CD4-positive, alpha-beta T cell (primary cell): ENCODE measurements at regions of chr6 and their contacts with region 1.

Region 1: DNA sequence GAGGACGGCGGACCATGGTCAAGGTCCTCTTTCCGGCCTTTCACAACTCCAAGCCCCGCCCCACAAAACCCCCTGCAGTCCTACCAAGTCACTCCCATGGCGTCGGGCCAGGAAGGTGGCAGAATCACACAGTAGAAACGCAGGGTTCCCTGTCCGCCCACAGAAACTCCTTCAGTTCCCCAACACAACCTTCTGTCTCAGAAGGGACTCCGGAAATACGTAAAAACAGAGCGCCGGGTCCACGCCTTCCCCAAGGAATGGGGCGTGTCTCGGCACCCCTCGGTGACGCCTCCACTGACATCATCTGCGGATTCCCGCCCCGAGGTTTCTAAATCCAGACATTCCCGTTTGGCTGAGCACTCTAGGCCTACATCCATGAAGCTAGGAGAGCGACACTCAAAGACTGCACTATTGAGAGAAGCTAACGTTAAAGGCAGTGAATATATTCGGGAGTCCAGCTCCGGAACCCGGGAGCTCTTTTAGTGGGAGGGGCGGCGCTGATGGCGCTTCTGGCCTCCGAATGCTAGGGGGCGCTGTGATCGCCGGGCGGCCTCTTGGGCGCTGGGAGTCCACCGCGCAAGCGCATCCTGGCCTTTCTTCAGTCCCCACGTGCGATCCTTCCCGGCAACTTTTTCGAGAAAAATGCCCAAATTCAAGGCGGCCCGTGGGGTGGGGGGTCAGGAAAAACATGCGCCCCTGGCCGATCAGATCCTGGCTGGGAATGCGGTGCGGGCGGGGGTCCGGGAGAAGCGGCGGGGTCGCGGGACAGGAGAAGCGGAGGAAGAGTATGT is at the starts of genes BYSL and MED20:
- DNase-seq: peak; percentile 89 to 97 (median 93)
- ATAC-seq: peak; percentile 90
- H3K4me3 ChIP-seq: peak within 1 kb of the TSS; percentile 78
- H3K4me3 Mint-ChIP-seq: peak within 1 kb of the TSS; percentile 99
- H3K27ac ChIP-seq: peak within 1 kb of the TSS; percentile 97 to 98
- H3K27ac Mint-ChIP-seq: peak within 1 kb of the TSS; percentile 94
- H3K4me1 ChIP-seq: peaks cover 31% of the 10 kb centered on the region
- H3K4me1 Mint-ChIP-seq: peaks cover 55% of the 10 kb centered on the region
- H3K27me3 ChIP-seq: no peaks in the 10 kb centered on the region
- H3K27me3 Mint-ChIP-seq: no peaks in the 10 kb centered on the region
- CTCF ChIP-seq: peak; percentile 97
- total RNA-seq, gene BYSL: 1.2 to 1.6 TPM
- total RNA-seq, gene MED20: 1.3 to 1.6 TPM

Region 2: DNA sequence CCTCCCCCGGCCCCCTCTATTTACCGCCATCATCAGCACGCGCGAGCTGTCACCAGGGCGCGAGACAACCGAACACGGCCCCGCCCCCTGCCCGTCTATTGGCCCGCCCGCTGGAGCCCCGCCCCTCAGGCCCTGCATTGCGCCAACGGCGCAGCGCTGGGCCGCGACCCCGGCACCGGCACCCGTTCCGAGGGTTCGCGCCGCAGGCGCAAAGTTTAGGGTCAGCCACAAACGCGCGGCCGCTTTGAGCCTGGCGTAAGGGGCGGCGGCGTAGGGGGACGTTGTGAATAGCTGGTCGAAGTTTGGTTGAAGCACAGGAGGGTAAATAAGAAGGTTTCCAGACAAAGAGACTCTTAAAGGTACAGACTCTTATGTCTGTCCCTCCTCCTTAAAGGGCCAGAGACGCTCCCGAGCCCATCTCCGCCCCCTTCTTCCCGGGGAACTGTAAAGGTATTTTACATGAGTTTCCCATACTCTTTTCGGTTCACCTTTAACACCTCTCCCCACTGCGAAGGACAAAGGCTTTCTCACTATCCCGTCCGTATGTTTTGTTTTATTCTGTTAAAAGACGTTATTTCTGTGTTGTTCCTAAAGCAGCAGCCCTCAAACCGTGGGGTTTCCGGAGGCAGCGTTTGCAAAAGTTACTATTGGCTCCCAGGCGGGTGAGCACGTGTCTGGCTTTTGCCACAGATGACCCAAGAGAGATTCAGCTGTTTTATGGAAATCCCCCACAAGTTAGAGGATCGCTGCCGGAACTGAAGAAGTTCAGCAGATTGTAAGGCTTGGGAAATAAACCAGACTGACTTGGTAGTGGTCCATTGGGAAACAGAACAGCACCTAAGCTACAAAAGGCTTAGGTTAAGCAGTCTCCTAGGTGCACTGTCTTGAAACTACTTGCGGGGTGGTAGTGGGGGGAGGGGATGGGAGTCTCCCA is 25.5 kb before region 1 on chr6 and contains the start of gene USP49:
- CTCF ChIA-PET with region 1: interaction called, 7 read pairs
- POLR2A ChIA-PET with region 1: interaction called, 12 read pairs
- intact Hi-C with region 1: loop called (anchors 1 kb)
- DNase-seq: peak; percentile 79 to 96 (median 88)
- ATAC-seq: peak; percentile 93
- H3K4me3 ChIP-seq: peak within 1 kb of the TSS; percentile 84
- H3K4me3 Mint-ChIP-seq: no peak within 1 kb of the TSS
- H3K27ac ChIP-seq: peak within 1 kb of the TSS; percentile 77 to 80
- H3K27ac Mint-ChIP-seq: no peak within 1 kb of the TSS
- H3K4me1 ChIP-seq: peaks cover 21% of the 10 kb centered on the region
- H3K4me1 Mint-ChIP-seq: peaks cover 12% of the 10 kb centered on the region
- H3K27me3 ChIP-seq: no peaks in the 10 kb centered on the region
- H3K27me3 Mint-ChIP-seq: no peaks in the 10 kb centered on the region
- CTCF ChIP-seq: no peak
- total RNA-seq, gene USP49: 1.3 TPM

Region 3: DNA sequence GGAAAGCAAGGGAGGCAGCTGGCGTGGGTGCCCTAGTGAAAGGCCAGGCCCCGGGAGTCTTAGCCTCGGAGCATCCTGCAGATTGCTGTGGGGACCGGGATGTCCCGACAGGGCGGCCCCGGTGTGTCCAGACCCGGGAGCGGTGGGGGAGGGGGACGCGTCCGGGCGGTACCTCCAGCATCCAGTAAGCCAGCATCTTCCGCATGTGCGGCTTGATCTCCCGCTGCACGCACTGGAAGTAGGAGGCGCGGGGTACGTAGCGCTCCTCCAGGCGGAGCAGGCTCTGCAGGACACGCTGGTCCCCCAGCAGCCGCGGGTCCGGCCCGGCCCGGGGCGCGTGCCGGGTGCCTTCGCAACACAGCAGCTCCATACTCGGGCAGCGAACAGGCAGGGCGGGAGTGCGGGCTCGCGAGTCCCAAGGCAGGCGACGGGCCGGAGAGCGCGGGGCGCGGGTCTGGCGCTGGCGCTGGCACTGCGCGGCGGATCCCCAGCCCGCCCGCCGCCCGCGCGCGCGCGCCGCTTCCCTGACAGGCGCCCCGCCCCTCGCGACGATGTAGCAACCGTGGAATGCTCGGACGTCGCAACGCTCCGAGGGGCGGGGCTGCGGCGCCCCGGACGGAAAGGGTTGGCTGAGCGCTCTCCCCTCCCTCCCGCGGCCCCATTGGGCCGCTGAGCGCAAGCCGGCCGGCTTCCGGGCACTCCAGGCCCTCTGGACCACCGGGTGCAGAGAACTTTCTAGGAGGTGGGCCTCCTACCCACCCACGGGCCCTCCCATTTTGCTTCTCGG is 20.4 kb after region 1 on chr6 and contains the start of gene CCND3:
- CTCF ChIA-PET with region 1: interaction called, 84 read pairs
- POLR2A ChIA-PET with region 1: interaction called, 35 read pairs
- intact Hi-C with region 1: loop called (anchors 1 kb)
- DNase-seq: peak; percentile 63 to 92 (median 81)
- ATAC-seq: peak; percentile 55
- H3K4me3 ChIP-seq: peak within 1 kb of the TSS; percentile 96
- H3K4me3 Mint-ChIP-seq: peak within 1 kb of the TSS; percentile 97
- H3K27ac ChIP-seq: peak within 1 kb of the TSS; percentile 68 to 74
- H3K27ac Mint-ChIP-seq: peak within 1 kb of the TSS; percentile 93
- H3K4me1 ChIP-seq: peaks cover 72% of the 10 kb centered on the region
- H3K4me1 Mint-ChIP-seq: peaks cover 80% of the 10 kb centered on the region
- H3K27me3 ChIP-seq: no peaks in the 10 kb centered on the region
- H3K27me3 Mint-ChIP-seq: no peaks in the 10 kb centered on the region
- CTCF ChIP-seq: no peak
- total RNA-seq, gene CCND3: 247 to 248 TPM

Region 4: GRCh38 chr6:42021847-42022754 is 101.0 kb after region 1 on chr6:
- CTCF ChIA-PET with region 1: interaction called, 5 read pairs
- POLR2A ChIA-PET with region 1: interaction called, 10 read pairs
- intact Hi-C with region 1: no loop called
- DNase-seq: peak; percentile 31 to 87 (median 61)
- ATAC-seq: peak; percentile 85
- H3K4me3 ChIP-seq: peak overlapping the region; percentile 17
- H3K4me3 Mint-ChIP-seq: peak overlapping the region; percentile 78
- H3K27ac ChIP-seq: peak overlapping the region; percentile 48 to 78
- H3K27ac Mint-ChIP-seq: peak overlapping the region; percentile 94
- H3K4me1 ChIP-seq: peaks cover 87% of the 10 kb centered on the region
- H3K4me1 Mint-ChIP-seq: peaks cover 71% of the 10 kb centered on the region
- H3K27me3 ChIP-seq: no peaks in the 10 kb centered on the region
- H3K27me3 Mint-ChIP-seq: no peaks in the 10 kb centered on the region
- CTCF ChIP-seq: no peak

Region 5: GRCh38 chr6:42038811-42039408 is 117.8 kb after region 1 on chr6:
- CTCF ChIA-PET with region 1: interaction called, 70 read pairs
- POLR2A ChIA-PET with region 1: interaction called, 30 read pairs
- intact Hi-C with region 1: loop called (anchors 1 to 2 kb)
- DNase-seq: no peak
- ATAC-seq: no peak
- H3K4me3 ChIP-seq: peak overlapping the region; percentile 49
- H3K4me3 Mint-ChIP-seq: peak overlapping the region; percentile 88
- H3K27ac ChIP-seq: peak overlapping the region; percentile 60 to 61
- H3K27ac Mint-ChIP-seq: peak overlapping the region; percentile 89
- H3K4me1 ChIP-seq: peaks cover 98% of the 10 kb centered on the region
- H3K4me1 Mint-ChIP-seq: peaks cover 75% of the 10 kb centered on the region
- H3K27me3 ChIP-seq: no peaks in the 10 kb centered on the region
- H3K27me3 Mint-ChIP-seq: no peaks in the 10 kb centered on the region
- CTCF ChIP-seq: no peak

Region 6: GRCh38 chr6:42050266-42051032 is 129.3 kb after region 1 on chr6 and contains the start of gene TAF8:
- CTCF ChIA-PET with region 1: interaction called, 70 read pairs
- POLR2A ChIA-PET with region 1: interaction called, 30 read pairs
- intact Hi-C with region 1: loop called in 1 of 2 experiments (anchors 2 kb)
- DNase-seq: peak; percentile 78 to 95 (median 84)
- ATAC-seq: peak; percentile 53
- H3K4me3 ChIP-seq: peak within 1 kb of the TSS; percentile 85
- H3K4me3 Mint-ChIP-seq: peak within 1 kb of the TSS; percentile 96
- H3K27ac ChIP-seq: peak within 1 kb of the TSS; percentile 85 to 89
- H3K27ac Mint-ChIP-seq: peak within 1 kb of the TSS; percentile 89
- H3K4me1 ChIP-seq: peaks cover 61% of the 10 kb centered on the region
- H3K4me1 Mint-ChIP-seq: peaks cover 72% of the 10 kb centered on the region
- H3K27me3 ChIP-seq: no peaks in the 10 kb centered on the region
- H3K27me3 Mint-ChIP-seq: no peaks in the 10 kb centered on the region
- CTCF ChIP-seq: no peak
- total RNA-seq, gene TAF8: 30.1 to 34.7 TPM

Region 7: GRCh38 chr6:42084889-42085288 is 163.8 kb after region 1 on chr6:
- CTCF ChIA-PET with region 1: no interaction called
- POLR2A ChIA-PET with region 1: no interaction called
- intact Hi-C with region 1: no loop called
- DNase-seq: no peak
- ATAC-seq: no peak
- H3K4me3 ChIP-seq: no peak overlapping the region
- H3K4me3 Mint-ChIP-seq: no peak overlapping the region
- H3K27ac ChIP-seq: no peak overlapping the region
- H3K27ac Mint-ChIP-seq: no peak overlapping the region
- H3K4me1 ChIP-seq: no peaks in the 10 kb centered on the region
- H3K4me1 Mint-ChIP-seq: no peaks in the 10 kb centered on the region
- H3K27me3 ChIP-seq: no peaks in the 10 kb centered on the region
- H3K27me3 Mint-ChIP-seq: no peaks in the 10 kb centered on the region
- CTCF ChIP-seq: no peak

Region 8: DNA sequence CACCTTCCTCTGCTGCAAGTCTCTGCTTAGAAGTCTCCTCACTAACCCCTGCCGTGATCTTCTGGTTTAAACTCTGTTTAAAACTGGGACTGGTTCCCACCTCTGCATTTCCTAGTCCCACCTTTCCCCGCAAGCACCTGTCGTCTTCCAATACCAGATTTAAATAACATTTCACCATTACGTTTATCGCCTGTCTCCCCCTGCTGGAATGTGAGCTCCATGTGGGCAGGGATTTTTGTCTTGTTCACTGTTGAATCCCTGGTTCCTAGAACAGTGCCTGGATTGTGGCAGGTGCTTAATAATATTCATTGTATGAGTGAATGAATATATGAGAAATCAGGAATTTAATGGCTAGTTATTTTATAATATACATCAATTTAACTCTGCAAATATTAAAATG is 254.7 kb after region 1 on chr6:
- CTCF ChIA-PET with region 1: no interaction called
- POLR2A ChIA-PET with region 1: no interaction called
- intact Hi-C with region 1: no loop called
- DNase-seq: peak in 1 of 14 experiments; percentile 8
- ATAC-seq: no peak
- H3K4me3 ChIP-seq: no peak overlapping the region
- H3K4me3 Mint-ChIP-seq: no peak overlapping the region
- H3K27ac ChIP-seq: no peak overlapping the region
- H3K27ac Mint-ChIP-seq: no peak overlapping the region
- H3K4me1 ChIP-seq: peaks cover 8% of the 10 kb centered on the region
- H3K4me1 Mint-ChIP-seq: no peaks in the 10 kb centered on the region
- H3K27me3 ChIP-seq: peaks cover 0 to 2% of the 10 kb centered on the region in 2 experiments
- H3K27me3 Mint-ChIP-seq: peaks cover 10% of the 10 kb centered on the region
- CTCF ChIP-seq: no peak